IMR-90 (cell line): ENCODE measurements at regions of chr1 and their contacts with region 1.

Region 1: DNA sequence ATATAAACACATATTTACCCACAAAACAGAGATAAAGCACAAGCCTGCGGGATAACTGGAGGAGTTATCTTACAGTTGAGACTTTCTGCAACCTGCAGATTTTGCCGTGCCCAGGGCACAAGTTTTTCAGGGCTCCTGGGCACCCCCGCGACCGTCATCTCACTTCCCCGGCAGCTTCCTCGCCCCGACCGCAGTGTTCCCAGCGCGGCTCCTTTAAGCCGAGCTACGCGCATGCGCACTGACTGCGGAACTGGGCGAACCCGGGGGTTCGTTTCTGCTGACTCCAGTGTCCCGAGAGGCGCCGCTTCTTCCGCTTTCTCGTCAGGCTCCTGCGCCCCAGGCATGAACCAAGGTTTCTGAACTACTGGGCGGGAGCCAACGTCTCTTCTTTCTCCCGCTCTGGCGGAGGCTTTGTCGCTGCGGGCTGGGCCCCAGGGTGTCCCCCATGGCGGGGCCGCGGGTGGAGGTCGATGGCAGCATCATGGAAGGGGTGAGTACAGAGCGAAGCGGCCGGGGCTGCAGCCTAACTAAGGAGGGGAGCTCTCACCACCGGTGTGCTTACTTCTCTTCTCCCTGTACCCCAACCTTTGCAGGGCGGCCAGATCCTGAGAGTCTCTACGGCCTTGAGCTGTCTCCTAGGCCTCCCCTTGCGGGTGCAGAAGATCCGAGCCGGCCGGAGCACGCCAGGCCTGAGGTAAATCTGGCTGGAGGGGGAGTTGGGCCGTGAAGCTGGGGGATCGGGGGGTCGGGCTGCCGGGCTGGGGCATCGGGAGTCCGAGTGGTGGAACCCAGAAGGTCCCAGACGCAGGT is at the start of gene RTCA:
- DNase-seq: peak; percentile 93
- ATAC-seq: peak; percentile 99
- H3K4me3 ChIP-seq: peak within 1 kb of the TSS; percentile 66
- H3K27ac ChIP-seq: peak within 1 kb of the TSS; percentile 78
- H3K4me1 ChIP-seq: peaks cover 2% of the 10 kb centered on the region; the same call in 1 of the 2 replicates
- H3K27me3 ChIP-seq: no peaks in the 10 kb centered on the region
- CTCF ChIP-seq: no peak
- POLR2A ChIP-seq: no peak
- RAD21 ChIP-seq: no peak
- total RNA-seq, gene RTCA: 29.6 and 45.3 TPM in 2 replicates

Region 2: DNA sequence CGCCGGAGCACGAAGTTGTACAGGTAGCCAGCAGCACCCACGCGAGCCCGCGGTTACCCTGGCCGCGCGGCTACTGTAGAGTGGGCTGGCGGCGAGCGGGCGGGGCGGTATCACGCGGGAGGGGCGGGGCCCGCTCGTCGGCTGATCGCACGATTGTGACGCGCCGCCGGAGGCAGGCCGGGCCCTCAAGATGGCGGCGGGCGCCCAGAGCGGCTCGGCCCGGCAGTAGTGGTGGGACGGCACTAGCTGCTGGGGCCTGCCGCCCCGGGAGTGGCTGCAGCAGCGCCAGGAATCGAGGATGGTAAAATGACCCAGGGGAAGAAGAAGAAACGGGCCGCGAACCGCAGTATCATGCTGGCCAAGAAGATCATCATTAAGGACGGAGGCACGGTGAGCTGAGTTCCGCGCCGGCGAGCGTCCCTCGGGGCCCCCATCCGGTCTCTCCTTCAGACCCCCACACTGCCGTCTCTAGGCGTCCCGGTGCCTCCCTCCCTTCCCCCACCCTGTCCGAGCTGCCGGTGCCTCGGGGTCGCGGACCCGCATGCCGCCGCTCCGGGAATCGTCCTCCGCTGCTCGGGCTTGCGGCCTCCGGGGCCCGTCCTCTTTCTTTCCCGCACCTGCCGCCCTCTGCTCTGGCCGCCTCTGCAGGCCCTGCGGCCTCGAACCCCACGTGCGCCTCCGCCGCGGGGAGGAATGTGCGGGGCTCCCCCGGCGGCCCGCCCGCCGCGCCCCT is 228.0 kb before region 1 on chr1:
- CTCF ChIA-PET with region 1: no interaction called
- POLR2A ChIA-PET with region 1: no interaction called
- dilution Hi-C with region 1: no loop called
- in situ Hi-C with region 1: no loop called
- intact Hi-C with region 1: loop called (anchors 2 kb)
- DNase-seq: peak; percentile 83
- ATAC-seq: peak; percentile 95
- H3K4me3 ChIP-seq: peak overlapping the region; percentile 99
- H3K27ac ChIP-seq: peak overlapping the region; percentile 99
- H3K4me1 ChIP-seq: no peaks in the 10 kb centered on the region
- H3K27me3 ChIP-seq: no peaks in the 10 kb centered on the region
- CTCF ChIP-seq: no peak
- POLR2A ChIP-seq: peak; percentile 95
- RAD21 ChIP-seq: no peak

Region 3: DNA sequence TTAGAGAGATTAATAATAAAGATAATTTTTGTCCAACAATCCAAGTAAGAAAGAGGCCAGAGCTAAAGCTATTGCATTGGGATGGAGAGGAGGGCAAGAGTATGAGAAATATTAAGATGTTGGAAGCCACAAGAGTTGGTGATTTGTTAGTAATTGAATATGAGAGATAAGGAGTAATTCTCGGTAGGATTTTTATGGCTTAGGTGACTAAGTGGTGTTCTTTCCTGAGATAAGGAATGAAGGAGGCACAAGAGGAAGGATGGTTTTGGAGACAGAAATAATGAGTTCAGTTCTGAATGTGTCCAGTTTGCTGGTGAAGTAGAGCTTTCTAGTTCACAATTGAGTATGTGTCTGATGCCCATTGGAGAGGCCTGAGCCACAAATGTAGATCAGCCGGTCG is 123.8 kb before region 1 on chr1:
- CTCF ChIA-PET with region 1: no interaction called
- POLR2A ChIA-PET with region 1: no interaction called
- dilution Hi-C with region 1: no loop called
- in situ Hi-C with region 1: no loop called
- intact Hi-C with region 1: loop called (anchors 5 kb)
- DNase-seq: no peak
- ATAC-seq: no peak
- H3K4me3 ChIP-seq: no peak overlapping the region
- H3K27ac ChIP-seq: no peak overlapping the region
- H3K4me1 ChIP-seq: no peaks in the 10 kb centered on the region
- H3K27me3 ChIP-seq: no peaks in the 10 kb centered on the region
- CTCF ChIP-seq: no peak
- POLR2A ChIP-seq: no peak
- RAD21 ChIP-seq: no peak

Region 4: DNA sequence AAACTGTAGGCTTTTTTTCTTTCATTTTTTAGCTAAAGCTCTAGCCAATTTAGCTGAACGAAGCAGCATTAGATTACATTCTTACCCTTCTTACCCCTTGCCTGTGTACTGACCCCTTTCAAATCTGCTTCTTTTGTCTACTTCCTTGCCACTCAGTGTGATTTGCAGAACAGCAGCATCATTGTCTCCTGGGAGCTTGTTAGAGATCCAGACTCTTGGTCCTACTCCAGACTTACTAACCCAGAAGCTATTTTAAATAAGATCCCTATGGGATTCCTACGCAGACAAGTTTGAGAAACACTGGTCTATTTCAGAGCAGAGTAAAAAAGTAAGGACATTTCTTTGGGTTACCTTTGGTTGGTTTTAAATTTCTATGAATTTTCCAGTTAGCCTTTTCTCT is 101.9 kb before region 1 on chr1:
- CTCF ChIA-PET with region 1: no interaction called
- POLR2A ChIA-PET with region 1: no interaction called
- dilution Hi-C with region 1: no loop called
- in situ Hi-C with region 1: no loop called
- intact Hi-C with region 1: no loop called
- DNase-seq: peak; percentile 67
- ATAC-seq: peak; percentile 74
- H3K4me3 ChIP-seq: no peak overlapping the region
- H3K27ac ChIP-seq: no peak overlapping the region
- H3K4me1 ChIP-seq: no peaks in the 10 kb centered on the region
- H3K27me3 ChIP-seq: no peaks in the 10 kb centered on the region
- CTCF ChIP-seq: no peak
- POLR2A ChIP-seq: no peak
- RAD21 ChIP-seq: no peak

Region 5: DNA sequence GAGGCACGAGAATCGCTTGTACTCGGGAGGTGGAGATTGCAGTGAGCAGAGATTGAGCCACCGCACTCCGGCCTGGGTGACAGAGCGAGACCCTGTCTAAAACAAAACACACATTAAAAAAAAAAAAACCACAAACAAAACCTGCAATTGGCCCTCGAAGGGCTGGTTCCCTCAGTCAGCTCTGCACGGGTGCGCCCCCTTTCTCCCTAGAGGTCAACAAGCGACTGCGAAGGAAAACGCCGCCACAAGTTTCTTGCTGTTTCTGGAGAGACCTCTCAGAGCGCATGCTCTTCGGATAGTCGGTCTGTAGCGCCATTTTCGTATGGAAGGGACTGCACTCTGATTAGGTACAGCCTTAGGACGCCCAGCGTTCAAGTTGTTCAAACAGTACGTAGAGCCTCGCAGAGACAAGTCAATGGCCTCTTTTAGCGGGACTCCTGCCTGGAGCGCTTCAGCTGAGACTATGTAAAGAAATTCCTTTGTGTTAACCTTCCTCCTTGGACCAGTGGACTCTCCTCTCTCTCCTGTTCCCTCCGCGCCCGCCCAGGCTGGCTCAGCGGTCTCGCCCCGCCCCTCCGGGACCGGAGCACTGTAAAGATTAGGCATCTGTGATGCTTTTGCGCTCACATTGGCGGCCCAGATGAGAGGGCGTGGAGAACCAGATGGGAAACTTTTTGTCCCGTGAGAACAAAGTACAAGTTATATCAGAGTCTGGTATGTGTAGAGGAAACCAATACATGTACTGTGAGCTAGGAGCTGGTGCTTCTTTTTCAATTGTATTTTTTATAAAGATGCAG is 85.2 kb after region 1 on chr1:
- CTCF ChIA-PET with region 1: no interaction called
- POLR2A ChIA-PET with region 1: no interaction called
- dilution Hi-C with region 1: no loop called
- in situ Hi-C with region 1: no loop called
- intact Hi-C with region 1: loop called (anchors 5 kb)
- DNase-seq: peak; percentile 84
- ATAC-seq: peak; percentile 79
- H3K4me3 ChIP-seq: peak overlapping the region; percentile 86
- H3K27ac ChIP-seq: peak overlapping the region; percentile 69
- H3K4me1 ChIP-seq: peaks cover 4% of the 10 kb centered on the region; the same call in 1 of the 2 replicates
- H3K27me3 ChIP-seq: no peaks in the 10 kb centered on the region
- CTCF ChIP-seq: no peak
- POLR2A ChIP-seq: peak; percentile 20; the same call in 1 of the 2 replicates
- RAD21 ChIP-seq: no peak

Region 6: GRCh38 chr1:100895540-100896483 is 629.7 kb after region 1 on chr1 and contains the start of gene SLC30A7:
- CTCF ChIA-PET with region 1: no interaction called
- POLR2A ChIA-PET with region 1: no interaction called
- dilution Hi-C with region 1: no loop called
- in situ Hi-C with region 1: loop called (anchors 25 kb)
- intact Hi-C with region 1: no loop called
- DNase-seq: peak; percentile 86
- ATAC-seq: peak; percentile 92
- H3K4me3 ChIP-seq: peak within 1 kb of the TSS; percentile 69
- H3K27ac ChIP-seq: peak within 1 kb of the TSS; percentile 86
- H3K4me1 ChIP-seq: no peaks in the 10 kb centered on the region; the same call in 1 of the 2 replicates
- H3K27me3 ChIP-seq: no peaks in the 10 kb centered on the region
- CTCF ChIP-seq: no peak
- POLR2A ChIP-seq: peak; percentile 88
- RAD21 ChIP-seq: no peak
- total RNA-seq, gene SLC30A7: 60.2 and 87.2 TPM in 2 replicates